Testis (tissue), 5 donors: ENCODE measurements at regions of chr15 and their contacts with region 1.

Region 1: DNA sequence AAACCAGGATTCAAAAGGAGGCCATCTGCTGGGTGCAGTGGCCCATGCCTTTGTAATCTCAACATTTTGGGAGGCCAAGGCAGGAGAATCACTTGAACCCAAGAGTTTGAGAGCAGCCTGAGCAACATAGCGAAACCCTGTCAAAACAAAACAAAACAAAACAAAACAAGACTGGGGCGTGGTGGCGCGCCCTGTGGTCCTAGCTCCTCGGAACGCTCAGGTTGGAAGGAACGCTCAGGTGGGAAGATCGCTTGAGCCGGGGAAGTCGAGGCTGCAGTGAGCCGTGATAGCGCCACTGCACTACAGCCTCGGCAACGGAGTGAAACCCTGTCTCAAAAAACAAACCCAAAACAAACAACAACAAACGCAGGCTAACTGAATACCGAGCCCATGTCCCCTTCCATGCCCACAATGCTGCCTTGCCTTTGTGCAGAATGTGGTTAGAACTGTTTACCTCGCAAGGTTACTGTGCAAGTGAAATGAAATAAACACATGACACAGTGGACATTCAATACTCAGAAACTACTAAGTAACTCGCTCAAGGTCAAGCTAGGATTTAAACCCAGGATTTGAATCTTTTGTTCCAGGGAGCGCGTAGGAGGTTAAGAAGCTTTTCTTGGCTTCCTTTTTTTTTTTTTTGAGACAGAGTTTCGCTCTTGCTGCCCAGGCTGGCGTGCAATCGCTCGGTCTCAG is 766 bp upstream of the EMC4 start:
- DNase-seq: no peak
- H3K4me3 ChIP-seq: peak overlapping the region; percentile 80 to 99
- H3K27ac ChIP-seq: peak overlapping the region; percentile 88 to 90
- H3K4me1 ChIP-seq: peaks cover 16% of the 10 kb centered on the region
- H3K27me3 ChIP-seq: no peaks in the 10 kb centered on the region
- CTCF ChIP-seq: no peak
- POLR2A ChIP-seq: no peak

Region 2: GRCh38 chr15:33278816-33279612 is 945.0 kb before region 1 on chr15:
- intact Hi-C with region 1: no loop called
- DNase-seq: no peak
- H3K4me3 ChIP-seq: no peak overlapping the region
- H3K27ac ChIP-seq: no peak overlapping the region
- H3K4me1 ChIP-seq: no peaks in the 10 kb centered on the region
- H3K27me3 ChIP-seq: no peaks in the 10 kb centered on the region
- CTCF ChIP-seq: no peak
- POLR2A ChIP-seq: no peak

Region 3: GRCh38 chr15:34070003-34070402 is 154.0 kb before region 1 on chr15:
- intact Hi-C with region 1: no loop called
- DNase-seq: no peak
- H3K4me3 ChIP-seq: no peak overlapping the region
- H3K27ac ChIP-seq: no peak overlapping the region
- H3K4me1 ChIP-seq: no peaks in the 10 kb centered on the region
- H3K27me3 ChIP-seq: no peaks in the 10 kb centered on the region
- CTCF ChIP-seq: no peak
- POLR2A ChIP-seq: no peak

Region 4: DNA sequence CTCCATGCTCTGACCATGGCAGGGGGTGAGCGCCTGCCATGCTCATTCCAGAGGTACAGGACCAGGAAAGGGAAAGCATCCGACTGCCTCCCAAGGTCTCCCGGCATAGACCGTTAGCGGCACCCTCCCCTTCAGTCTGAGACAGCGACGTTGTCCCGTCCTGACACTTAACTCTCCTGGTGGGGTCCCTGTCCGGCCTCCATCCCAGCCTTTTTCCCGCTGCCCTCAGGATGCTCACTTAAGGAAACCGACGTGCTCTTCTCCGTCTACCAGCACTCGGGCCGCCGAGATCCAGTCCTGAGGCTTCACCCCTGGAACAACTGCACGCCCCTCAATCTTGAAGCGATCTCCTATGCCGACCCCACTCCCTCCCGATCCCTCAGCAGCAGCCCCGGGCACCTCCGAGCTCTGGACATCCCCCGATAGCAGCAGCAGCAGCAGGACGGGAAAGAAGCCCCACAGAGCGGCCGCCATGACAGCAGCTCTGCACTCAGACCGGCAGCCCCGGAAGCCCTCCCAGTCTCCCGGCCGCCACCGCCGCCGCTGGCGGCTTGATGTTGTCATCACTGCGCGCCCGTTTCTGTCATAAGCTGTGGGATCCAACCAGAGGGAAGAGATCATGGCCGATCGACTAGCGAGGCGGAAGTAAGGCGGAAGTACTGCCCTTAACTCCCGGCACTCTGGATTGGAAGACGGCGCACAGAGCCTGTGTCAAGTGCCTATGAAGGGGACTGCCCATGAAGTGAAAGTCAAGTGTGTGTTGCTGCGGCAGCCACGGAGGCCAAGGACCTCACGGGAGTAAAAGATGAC is 122.5 kb before region 1 on chr15 and contains the starts of genes EMC7 and PGBD4:
- intact Hi-C with region 1: loop called (anchors 10 kb)
- DNase-seq: peak; percentile 99
- H3K4me3 ChIP-seq: peak within 1 kb of the TSS; percentile 85 to 96
- H3K27ac ChIP-seq: peak within 1 kb of the TSS; percentile 74 to 81
- H3K4me1 ChIP-seq: peaks cover 4% of the 10 kb centered on the region
- H3K27me3 ChIP-seq: no peaks in the 10 kb centered on the region
- CTCF ChIP-seq: peak in 1 of 3 experiments; percentile 12
- POLR2A ChIP-seq: no peak
- total RNA-seq, gene EMC7: 73.2 to 74.6 TPM
- total RNA-seq, gene PGBD4: 1.5 to 2.8 TPM

Region 5: DNA sequence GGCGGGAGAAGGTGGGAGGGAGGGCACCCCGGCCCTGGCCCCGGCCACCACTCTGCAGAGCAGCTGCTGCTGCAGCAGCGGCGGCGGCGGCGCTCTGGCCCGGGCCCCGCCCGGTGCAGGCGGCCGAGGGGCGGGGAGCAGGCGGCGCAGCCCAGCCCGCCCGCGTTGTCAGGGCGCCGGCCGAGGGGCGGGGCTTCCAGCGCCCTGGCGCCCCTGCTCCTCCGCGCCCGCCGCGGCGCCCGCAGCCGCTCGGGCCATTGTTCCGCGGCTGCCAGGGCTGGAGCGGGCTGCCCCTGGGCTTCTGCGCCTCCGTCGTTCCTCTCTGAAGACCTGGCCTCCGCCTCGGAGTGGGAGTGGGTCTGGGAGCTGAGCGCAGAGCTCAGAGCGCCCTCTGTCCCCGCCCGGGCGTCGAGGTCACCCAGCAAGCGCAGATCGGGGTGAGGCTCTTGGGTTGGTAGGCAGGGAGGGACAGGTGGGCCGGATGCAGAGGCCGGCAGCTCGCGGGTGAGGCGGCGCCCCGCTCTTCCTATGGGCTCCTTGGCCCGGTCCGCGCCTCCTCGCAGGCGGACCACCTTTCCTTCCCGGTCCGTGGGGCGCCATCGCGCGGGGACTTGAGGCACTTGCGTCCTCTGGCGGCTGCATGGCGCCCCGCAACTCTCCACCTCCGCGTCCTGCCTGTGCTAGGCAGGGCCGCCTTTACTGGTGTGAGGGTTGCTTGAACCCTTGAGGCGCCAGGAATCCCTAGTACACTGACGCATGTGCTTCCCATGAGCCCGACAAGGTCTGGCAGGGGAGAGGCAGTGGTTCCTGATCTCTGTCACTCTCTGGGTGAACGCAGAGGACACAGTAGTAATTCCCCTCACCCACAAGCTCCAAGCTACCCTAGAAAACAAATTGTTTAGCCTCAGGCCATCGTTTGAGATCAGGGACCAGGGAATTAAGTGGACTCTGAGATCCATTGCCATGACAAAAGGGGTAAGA is 143.3 kb after region 1 on chr15 and contains the start of gene LPCAT4:
- intact Hi-C with region 1: loop called (anchors 10 kb)
- DNase-seq: peak; percentile 91
- H3K4me3 ChIP-seq: peak within 1 kb of the TSS; percentile 80 to 97
- H3K27ac ChIP-seq: peak within 1 kb of the TSS; percentile 92 to 93
- H3K4me1 ChIP-seq: peaks cover 9% of the 10 kb centered on the region
- H3K27me3 ChIP-seq: no peaks in the 10 kb centered on the region
- CTCF ChIP-seq: peak; percentile 79 to 94 (median 84)
- POLR2A ChIP-seq: no peak
- total RNA-seq, gene LPCAT4: 9.9 to 13.4 TPM